HepG2 (cell line): ENCODE measurements at regions of chr13 and their contacts with region 1.

Region 1: DNA sequence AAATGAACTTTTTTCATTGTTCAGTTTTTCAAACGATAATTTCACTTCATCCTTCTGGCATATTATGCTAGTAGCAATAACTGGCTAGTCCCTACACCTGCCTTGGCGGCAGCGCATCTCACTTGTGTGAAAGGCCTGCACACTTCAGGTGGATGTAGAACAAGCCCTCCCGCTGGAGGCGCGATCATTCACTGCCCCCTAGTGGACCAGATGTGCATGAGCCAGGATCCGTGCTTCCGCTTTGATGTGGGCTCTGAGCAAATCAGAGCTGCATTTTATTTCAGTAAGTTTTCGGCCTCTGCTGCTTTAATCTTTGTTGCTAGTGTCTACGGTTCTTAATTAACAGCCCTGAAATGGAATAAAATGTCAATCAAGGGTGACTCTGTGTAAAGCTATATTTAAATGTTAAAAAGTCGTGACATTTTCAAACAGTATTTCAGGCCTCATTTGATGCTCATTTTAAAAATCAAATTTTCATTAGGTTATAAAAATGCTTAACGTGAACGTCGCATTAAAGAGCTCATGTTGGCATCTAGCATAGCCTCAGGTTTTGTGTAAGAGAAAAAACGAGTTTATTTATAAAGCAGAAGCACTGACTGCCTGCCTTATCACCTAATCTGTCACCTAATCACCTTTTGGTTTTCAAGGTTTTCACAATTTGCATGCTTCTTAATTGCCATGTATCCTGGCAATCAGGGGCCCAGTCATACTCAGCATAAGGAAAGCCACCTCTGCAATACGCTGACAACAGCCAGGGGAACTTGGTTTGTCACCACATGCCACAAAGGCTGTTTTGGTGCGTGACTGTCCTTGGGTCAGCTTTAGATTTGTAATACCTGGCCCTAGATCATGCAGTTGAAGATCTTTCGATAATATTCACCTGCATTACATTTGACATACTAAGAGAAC is 112.2 kb downstream of the TEX26 start:
- DNase-seq: peak; percentile 57
- ATAC-seq: peak; percentile 95
- H3K4me3 ChIP-seq: no peak overlapping the region; a peak in 1 of 6 replicates
- H3K27ac ChIP-seq: no peak overlapping the region
- H3K4me1 ChIP-seq: peaks cover 33% of the 10 kb centered on the region
- H3K27me3 ChIP-seq: no peaks in the 10 kb centered on the region; a peak in 1 of 5 replicates
- CTCF ChIP-seq: peak; percentile 95
- EP300 ChIP-seq: no peak
- POLR2A ChIP-seq: no peak
- RAD21 ChIP-seq: peak; percentile 79

Region 2: GRCh38 chr13:30132623-30133553 is 911.7 kb before region 1 on chr13:
- CTCF ChIA-PET with region 1: no interaction called
- POLR2A ChIA-PET with region 1: no interaction called
- in situ Hi-C with region 1: no loop called
- intact Hi-C with region 1: loop called (anchors 5 kb)
- DNase-seq: peak; percentile 80
- ATAC-seq: peak; percentile 97
- H3K4me3 ChIP-seq: peak overlapping the region in 1 of 3 experiments; percentile 20; a peak in 1 of 6 replicates
- H3K27ac ChIP-seq: no peak overlapping the region
- H3K4me1 ChIP-seq: peaks cover 9% of the 10 kb centered on the region; the same call in 1 of the 2 replicates
- H3K27me3 ChIP-seq: peaks cover 0 to 19% of the 10 kb centered on the region in 2 experiments; a peak in 3 of 5 replicates
- CTCF ChIP-seq: peak; percentile 94
- EP300 ChIP-seq: no peak
- POLR2A ChIP-seq: no peak
- RAD21 ChIP-seq: peak; percentile 86

Region 3: DNA sequence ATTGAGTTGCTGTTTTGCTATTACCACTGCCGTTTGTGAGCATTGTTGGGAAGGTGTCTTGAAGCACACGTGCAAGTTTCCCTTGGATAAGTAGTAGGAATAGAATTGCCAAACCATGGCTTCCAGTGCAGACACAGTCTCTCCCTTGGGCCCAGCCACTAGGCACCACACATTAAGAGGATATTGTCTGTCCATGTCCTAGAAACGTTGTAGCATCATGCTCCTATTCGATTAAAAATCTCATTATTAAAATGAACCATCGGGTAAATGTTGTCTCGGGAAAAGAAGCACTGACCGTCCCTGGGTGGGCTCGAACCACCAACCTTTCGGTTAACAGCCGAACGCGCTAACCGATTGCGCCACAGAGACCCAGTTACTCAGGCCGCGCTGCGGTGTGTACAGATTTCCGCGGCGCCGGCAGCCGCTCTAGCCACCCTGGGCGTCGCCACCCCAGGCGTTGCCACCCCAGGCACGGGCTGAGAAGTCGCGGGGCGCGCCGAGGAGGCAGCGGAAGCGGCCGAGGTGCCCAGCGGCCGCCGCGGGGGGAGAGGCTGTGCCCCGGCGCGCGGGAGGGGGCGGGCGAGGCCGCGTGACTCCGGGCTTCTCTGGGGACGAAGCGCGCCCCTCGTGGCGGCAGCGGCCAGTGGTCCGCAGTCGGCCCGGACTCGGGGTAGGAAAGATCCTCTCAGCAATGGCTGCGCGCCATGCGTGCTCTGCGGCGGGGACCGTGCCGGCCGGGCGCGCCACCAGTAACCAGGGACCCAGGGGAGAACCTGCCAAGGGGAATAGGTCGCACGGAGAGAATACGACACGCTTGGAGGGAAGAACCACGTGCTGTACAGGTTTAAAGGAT is 370.7 kb before region 1 on chr13:
- CTCF ChIA-PET with region 1: no interaction called
- POLR2A ChIA-PET with region 1: no interaction called
- in situ Hi-C with region 1: loop called (anchors 5 kb)
- intact Hi-C with region 1: loop called (anchors 10 kb)
- DNase-seq: peak; percentile 76
- ATAC-seq: peak; percentile 95
- H3K4me3 ChIP-seq: peak overlapping the region; percentile 58 to 73 (median 68)
- H3K27ac ChIP-seq: peak overlapping the region; percentile 65
- H3K4me1 ChIP-seq: peaks cover 27% of the 10 kb centered on the region
- H3K27me3 ChIP-seq: no peaks in the 10 kb centered on the region
- CTCF ChIP-seq: peak; percentile 79
- EP300 ChIP-seq: peak in 1 of 2 experiments; percentile 67; a peak in 2 of 4 replicates
- POLR2A ChIP-seq: peak; percentile 38 to 52; a peak in 2 of 4 replicates
- RAD21 ChIP-seq: peak; percentile 84

Region 4: GRCh38 chr13:30679483-30680330 is 364.9 kb before region 1 on chr13:
- CTCF ChIA-PET with region 1: no interaction called
- POLR2A ChIA-PET with region 1: no interaction called
- in situ Hi-C with region 1: loop called (anchors 5 kb)
- intact Hi-C with region 1: loop called (anchors 10 kb)
- DNase-seq: peak; percentile 20
- ATAC-seq: peak; percentile 89
- H3K4me3 ChIP-seq: no peak overlapping the region
- H3K27ac ChIP-seq: no peak overlapping the region
- H3K4me1 ChIP-seq: no peaks in the 10 kb centered on the region
- H3K27me3 ChIP-seq: peaks cover 0 to 3% of the 10 kb centered on the region in 2 experiments; a peak in 2 of 5 replicates
- CTCF ChIP-seq: peak; percentile 51
- EP300 ChIP-seq: no peak
- POLR2A ChIP-seq: no peak
- RAD21 ChIP-seq: no peak

Region 5: GRCh38 chr13:30763786-30764413 is 280.7 kb before region 1 on chr13:
- CTCF ChIA-PET with region 1: no interaction called
- POLR2A ChIA-PET with region 1: no interaction called
- in situ Hi-C with region 1: loop called (anchors 10 kb)
- intact Hi-C with region 1: no loop called
- DNase-seq: no peak
- ATAC-seq: no peak
- H3K4me3 ChIP-seq: no peak overlapping the region
- H3K27ac ChIP-seq: no peak overlapping the region
- H3K4me1 ChIP-seq: peaks cover 19% of the 10 kb centered on the region
- H3K27me3 ChIP-seq: peaks cover 0 to 1% of the 10 kb centered on the region in 2 experiments; a peak in 1 of 5 replicates
- CTCF ChIP-seq: no peak
- EP300 ChIP-seq: no peak
- POLR2A ChIP-seq: no peak
- RAD21 ChIP-seq: no peak

Region 6: GRCh38 chr13:30847650-30848307 is 196.9 kb before region 1 on chr13:
- CTCF ChIA-PET with region 1: no interaction called
- POLR2A ChIA-PET with region 1: no interaction called
- in situ Hi-C with region 1: loop called (anchors 10 kb)
- intact Hi-C with region 1: no loop called
- DNase-seq: no peak
- ATAC-seq: no peak
- H3K4me3 ChIP-seq: 0 out of 6 replicates have a peak overlapping the region, but pooled peaks of 1 of the 3 experiments have one; percentile 27
- H3K27ac ChIP-seq: no peak overlapping the region
- H3K4me1 ChIP-seq: peaks cover 97% of the 10 kb centered on the region
- H3K27me3 ChIP-seq: no peaks in the 10 kb centered on the region
- CTCF ChIP-seq: no peak
- EP300 ChIP-seq: no peak
- POLR2A ChIP-seq: no peak
- RAD21 ChIP-seq: no peak

Region 7: GRCh38 chr13:30865123-30866049 is 179.2 kb before region 1 on chr13:
- CTCF ChIA-PET with region 1: no interaction called
- POLR2A ChIA-PET with region 1: no interaction called
- in situ Hi-C with region 1: no loop called
- intact Hi-C with region 1: loop called (anchors 2 kb)
- DNase-seq: peak; percentile 80
- ATAC-seq: peak; percentile 97
- H3K4me3 ChIP-seq: peak overlapping the region in 2 of 3 experiments; percentile 40 to 54; a peak in 3 of 6 replicates
- H3K27ac ChIP-seq: peak overlapping the region; percentile 7
- H3K4me1 ChIP-seq: peaks cover 64% of the 10 kb centered on the region
- H3K27me3 ChIP-seq: no peaks in the 10 kb centered on the region; a peak in 1 of 5 replicates
- CTCF ChIP-seq: peak; percentile 97
- EP300 ChIP-seq: no peak
- POLR2A ChIP-seq: peak in 1 of 2 experiments; percentile 21; a peak in 1 of 4 replicates
- RAD21 ChIP-seq: peak; percentile 93

Region 8: DNA sequence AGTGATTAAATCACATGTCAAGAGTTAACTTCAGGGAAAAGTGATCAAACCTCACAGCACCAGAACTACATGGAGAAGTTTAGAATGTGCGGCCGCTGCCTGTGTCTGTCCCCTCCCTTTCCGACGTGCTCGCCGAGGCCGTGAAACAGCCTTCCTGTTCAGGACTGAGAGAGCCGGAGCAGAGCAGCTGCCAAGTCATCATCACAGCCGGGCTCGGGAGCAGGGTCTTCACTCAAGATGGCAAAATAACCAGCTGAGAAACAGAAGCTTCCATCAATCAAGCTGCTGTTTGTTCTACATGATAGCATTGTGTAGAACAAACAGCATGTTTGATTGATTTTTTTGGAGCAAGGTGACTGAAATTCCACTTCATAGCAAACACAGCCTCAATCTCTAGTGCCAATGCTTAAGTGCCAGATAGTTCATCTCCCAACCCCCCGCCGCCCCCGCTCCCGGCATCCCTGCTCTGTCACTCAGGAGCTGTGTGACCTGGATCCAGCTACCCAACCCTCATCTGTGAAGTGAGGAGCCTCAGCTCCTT is 46.4 kb after region 1 on chr13:
- CTCF ChIA-PET with region 1: no interaction called
- POLR2A ChIA-PET with region 1: no interaction called
- in situ Hi-C with region 1: no loop called
- intact Hi-C with region 1: no loop called
- DNase-seq: no peak
- ATAC-seq: peak; percentile 77
- H3K4me3 ChIP-seq: no peak overlapping the region
- H3K27ac ChIP-seq: no peak overlapping the region
- H3K4me1 ChIP-seq: no peaks in the 10 kb centered on the region
- H3K27me3 ChIP-seq: peaks cover 0 to 45% of the 10 kb centered on the region in 2 experiments; a peak in 3 of 5 replicates
- CTCF ChIP-seq: no peak
- EP300 ChIP-seq: no peak
- POLR2A ChIP-seq: no peak
- RAD21 ChIP-seq: no peak